ENCODE measurements at regions of chr6 and their contacts with region 1.

Region 1: GRCh38 chr6:134247231-134247833 is 70.6 kb downstream of the SGK1 start:
- DNase-seq: peak; percentile 44
- ATAC-seq: peak; percentile 82
- H3K4me3 Mint-ChIP-seq: peak overlapping the region; percentile 47
- H3K27ac Mint-ChIP-seq: peak overlapping the region; percentile 97
- H3K4me1 Mint-ChIP-seq: peaks cover 59% of the 10 kb centered on the region
- H3K27me3 Mint-ChIP-seq: no peaks in the 10 kb centered on the region
- CTCF ChIP-seq: no peak

Region 2: DNA sequence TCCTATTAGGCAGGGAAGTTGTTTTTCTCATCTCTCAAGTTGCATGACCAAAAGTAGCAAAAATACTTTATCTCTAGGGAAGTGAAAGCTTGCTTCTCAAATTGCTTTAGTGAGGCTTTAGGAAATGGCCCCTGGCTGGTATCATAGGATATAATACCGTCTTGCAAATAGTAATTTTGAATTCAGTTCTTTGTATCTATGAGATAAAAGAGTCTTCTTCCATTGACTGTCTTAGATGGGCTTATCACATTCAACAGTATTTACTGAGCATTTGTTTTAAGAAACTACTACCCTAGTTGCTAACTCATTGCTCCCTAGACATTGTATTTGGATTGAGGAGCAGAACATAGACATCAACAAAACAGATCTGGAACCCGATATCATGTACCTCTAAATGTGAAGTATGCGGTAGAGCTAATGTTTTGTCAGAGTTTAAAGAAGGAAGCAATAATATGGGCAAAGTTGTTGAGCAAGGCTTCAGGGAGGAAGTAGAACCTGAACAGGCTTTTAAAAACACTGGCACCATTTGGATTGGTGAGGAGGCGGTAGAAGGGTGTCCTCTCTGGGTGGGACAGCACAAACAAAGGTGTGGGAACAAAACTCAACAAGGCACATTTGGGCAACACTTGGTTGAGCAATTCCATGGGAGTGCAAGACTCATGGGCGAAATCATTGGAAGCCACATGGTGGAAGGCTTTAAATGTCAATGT is 30.9 kb before region 1 on chr6:
- CTCF ChIA-PET with region 1: no interaction called
- POLR2A ChIA-PET with region 1: interaction called, 4 read pairs
- intact Hi-C with region 1: loop called (anchors 1 kb)
- DNase-seq: no peak
- ATAC-seq: peak; percentile 74
- H3K4me3 Mint-ChIP-seq: peak overlapping the region; percentile 1
- H3K27ac Mint-ChIP-seq: peak overlapping the region; percentile 78
- H3K4me1 Mint-ChIP-seq: peaks cover 28% of the 10 kb centered on the region
- H3K27me3 Mint-ChIP-seq: no peaks in the 10 kb centered on the region
- CTCF ChIP-seq: no peak

Region 3: GRCh38 chr6:134261766-134262165 is 14.4 kb after region 1 on chr6:
- CTCF ChIA-PET with region 1: no interaction called
- POLR2A ChIA-PET with region 1: interaction called, 10 read pairs
- intact Hi-C with region 1: no loop called
- DNase-seq: no peak
- ATAC-seq: no peak
- H3K4me3 Mint-ChIP-seq: no peak overlapping the region
- H3K27ac Mint-ChIP-seq: no peak overlapping the region
- H3K4me1 Mint-ChIP-seq: no peaks in the 10 kb centered on the region
- H3K27me3 Mint-ChIP-seq: no peaks in the 10 kb centered on the region
- CTCF ChIP-seq: no peak

Region 4: DNA sequence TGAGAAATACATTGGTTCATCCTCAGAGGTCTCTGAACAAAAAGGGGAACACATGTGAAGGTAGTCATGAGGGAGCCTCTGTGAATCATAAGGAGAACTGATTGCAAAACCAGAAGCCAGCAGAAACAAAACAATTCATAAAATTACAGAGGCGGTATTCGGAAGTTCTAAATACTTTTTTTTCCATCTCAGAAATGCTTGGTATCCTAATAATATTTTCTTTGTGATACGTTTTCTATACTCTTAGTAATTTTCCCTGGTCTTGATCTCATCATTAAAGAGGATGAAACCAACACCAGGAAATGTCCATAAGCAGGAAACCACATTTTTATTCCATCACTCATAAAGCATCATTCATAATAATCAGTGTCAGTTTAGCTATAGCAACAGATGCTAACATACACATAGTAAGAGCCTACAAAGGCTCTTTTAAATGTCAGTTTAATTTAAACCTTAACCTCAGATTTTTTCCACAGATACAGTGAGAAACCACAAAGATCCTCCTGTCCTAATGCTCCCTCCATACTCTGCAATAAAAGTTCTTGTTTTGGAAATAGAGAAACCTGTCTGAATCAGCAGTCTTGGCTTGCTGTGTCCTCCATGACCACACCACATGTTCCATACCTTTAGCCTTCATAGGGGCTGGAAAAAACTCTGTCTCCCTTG is 41.3 kb after region 1 on chr6:
- CTCF ChIA-PET with region 1: interaction called, 4 read pairs
- POLR2A ChIA-PET with region 1: interaction called, 6 read pairs
- intact Hi-C with region 1: loop called (anchors 1 kb)
- DNase-seq: no peak
- ATAC-seq: peak; percentile 83
- H3K4me3 Mint-ChIP-seq: peak overlapping the region; percentile 16
- H3K27ac Mint-ChIP-seq: peak overlapping the region; percentile 54
- H3K4me1 Mint-ChIP-seq: peaks cover 22% of the 10 kb centered on the region
- H3K27me3 Mint-ChIP-seq: no peaks in the 10 kb centered on the region
- CTCF ChIP-seq: no peak

Region 5: GRCh38 chr6:134373282-134373922 is 126.1 kb after region 1 on chr6:
- CTCF ChIA-PET with region 1: no interaction called
- POLR2A ChIA-PET with region 1: interaction called, 4 read pairs
- intact Hi-C with region 1: loop called (anchors 1 kb)
- DNase-seq: no peak
- ATAC-seq: peak; percentile 97
- H3K4me3 Mint-ChIP-seq: peak overlapping the region; percentile 53
- H3K27ac Mint-ChIP-seq: peak overlapping the region; percentile 71
- H3K4me1 Mint-ChIP-seq: peaks cover 28% of the 10 kb centered on the region
- H3K27me3 Mint-ChIP-seq: no peaks in the 10 kb centered on the region
- CTCF ChIP-seq: no peak

Measured in activated B cell treated with CpG ODN at 0.5 μM for 24 hours (primary cell).